HEK293 (cell line): ENCODE measurements at regions of chr17 and their contacts with region 1.

Region 1: DNA sequence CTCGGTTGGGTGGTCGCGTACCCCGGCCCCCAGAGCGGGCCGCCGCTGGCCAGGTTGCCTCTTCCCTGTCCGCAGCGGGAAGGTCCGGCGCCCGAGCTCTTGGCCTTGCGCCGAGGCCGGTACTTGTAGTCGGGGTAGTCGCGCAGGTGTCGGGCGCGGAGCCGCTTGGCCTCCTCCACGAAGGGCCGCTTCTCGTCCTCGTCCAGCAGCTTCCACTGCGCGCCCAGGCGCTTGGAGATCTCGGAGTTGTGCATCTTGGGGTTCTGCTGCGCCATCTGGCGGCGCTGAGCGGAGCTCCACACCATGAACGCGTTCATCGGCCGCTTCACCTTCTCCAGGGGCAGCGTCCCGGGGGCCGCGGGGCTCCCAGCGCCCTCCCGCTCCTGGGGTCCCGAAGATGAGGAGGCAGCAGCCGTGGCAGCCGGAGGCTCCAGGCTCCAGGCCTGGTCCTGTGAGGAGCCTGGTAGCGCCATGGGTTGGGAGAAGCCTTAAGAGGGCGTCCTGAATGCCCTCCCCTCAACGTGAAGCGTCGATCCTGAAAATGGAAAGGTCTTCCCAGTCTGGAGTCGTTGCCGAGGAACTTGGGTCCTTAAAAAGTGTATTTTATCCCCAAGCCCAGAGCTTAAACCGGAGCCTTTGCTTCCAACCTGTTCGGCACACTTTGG is 558 bp downstream of the SOX15 start:
- H3K4me3 ChIP-seq: no peak overlapping the region
- H3K27ac ChIP-seq: no peak overlapping the region
- H3K4me1 ChIP-seq: no peaks in the 10 kb centered on the region; the same call in 1 of the 2 replicates
- CTCF ChIP-seq: no peak; the same call in 1 of the 2 replicates

Region 2: GRCh38 chr17:7502987-7503386 is 86.3 kb before region 1 on chr17:
- CTCF ChIA-PET with region 1: no interaction called
- POLR2A ChIA-PET with region 1: no interaction called
- H3K4me3 ChIP-seq: no peak overlapping the region
- H3K27ac ChIP-seq: no peak overlapping the region
- H3K4me1 ChIP-seq: no peaks in the 10 kb centered on the region
- CTCF ChIP-seq: no peak

Region 3: DNA sequence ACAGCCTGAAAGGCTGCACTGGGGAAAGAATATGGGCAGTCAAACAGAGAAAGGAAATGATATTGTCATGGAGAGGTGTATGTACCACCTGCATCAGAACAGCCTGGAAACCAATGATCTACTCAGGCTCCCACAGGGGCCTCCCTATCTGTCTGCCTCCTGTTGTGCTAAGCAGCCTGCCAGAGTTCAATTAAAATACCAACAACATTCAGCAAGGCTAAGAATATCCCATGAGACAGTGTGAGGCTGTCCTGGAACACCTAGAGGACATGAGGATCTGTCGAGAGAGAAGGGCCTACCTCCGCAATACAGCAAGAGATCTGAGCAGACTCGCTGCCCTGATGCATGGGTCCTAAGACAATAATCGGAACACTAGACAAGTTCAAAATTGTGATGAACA is 16.9 kb after region 1 on chr17:
- CTCF ChIA-PET with region 1: interaction called, 10 read pairs
- POLR2A ChIA-PET with region 1: interaction called, 3 read pairs
- H3K4me3 ChIP-seq: no peak overlapping the region
- H3K27ac ChIP-seq: no peak overlapping the region
- H3K4me1 ChIP-seq: peaks cover 3% of the 10 kb centered on the region
- CTCF ChIP-seq: no peak

Region 4: DNA sequence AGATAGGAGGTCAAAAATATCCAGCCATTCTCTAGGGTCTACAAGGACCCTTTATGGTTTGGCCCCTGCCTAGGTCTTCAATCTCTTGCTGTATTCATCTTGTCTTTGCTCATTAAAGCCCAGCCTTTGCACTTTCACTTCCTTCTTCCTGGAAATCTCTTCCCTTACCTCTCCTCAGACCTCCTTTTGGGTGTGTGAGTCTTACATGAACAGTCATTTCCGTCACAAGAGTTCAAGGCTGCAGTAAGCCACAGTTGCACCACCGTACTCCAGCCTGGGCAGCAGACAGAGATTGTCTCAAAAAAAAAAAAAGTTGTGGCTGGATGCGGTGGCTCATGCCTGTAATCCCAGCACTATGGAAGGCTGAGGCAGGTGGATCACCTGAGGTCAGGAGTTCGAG is 55.4 kb after region 1 on chr17:
- CTCF ChIA-PET with region 1: no interaction called
- POLR2A ChIA-PET with region 1: no interaction called
- H3K4me3 ChIP-seq: no peak overlapping the region
- H3K27ac ChIP-seq: no peak overlapping the region
- H3K4me1 ChIP-seq: no peaks in the 10 kb centered on the region
- CTCF ChIP-seq: no peak